ENCODE measurements at regions of chr2 and their contacts with region 1.

Region 1: GRCh38 chr2:201182650-201183364 is at the start of gene CASP10:
- DNase-seq: no peak
- H3K4me3 Mint-ChIP-seq: peak within 1 kb of the TSS; percentile 85
- H3K27ac Mint-ChIP-seq: peak within 1 kb of the TSS; percentile 90
- H3K4me1 Mint-ChIP-seq: peaks cover 58% of the 10 kb centered on the region
- H3K27me3 Mint-ChIP-seq: no peaks in the 10 kb centered on the region
- total RNA-seq, gene CASP10: 15.9 to 16.7 TPM

Region 2: GRCh38 chr2:200888704-200889625 is 293.8 kb before region 1 on chr2 and contains the starts of genes NIF3L1 and PPIL3:
- CTCF ChIA-PET with region 1: interaction called, 7 read pairs
- POLR2A ChIA-PET with region 1: interaction called, 10 read pairs
- intact Hi-C with region 1: no loop called
- DNase-seq: peak; percentile 99
- H3K4me3 Mint-ChIP-seq: peak within 1 kb of the TSS; percentile 98
- H3K27ac Mint-ChIP-seq: peak within 1 kb of the TSS; percentile 100
- H3K4me1 Mint-ChIP-seq: peaks cover 44% of the 10 kb centered on the region
- H3K27me3 Mint-ChIP-seq: no peaks in the 10 kb centered on the region
- total RNA-seq, gene NIF3L1: 30.8 to 32.7 TPM
- total RNA-seq, gene PPIL3: 84.0 to 87.9 TPM

Region 3: GRCh38 chr2:201071479-201072200 is 111.2 kb before region 1 on chr2 and contains the starts of genes HYCC2 and NDUFB3:
- CTCF ChIA-PET with region 1: interaction called, 18 read pairs
- POLR2A ChIA-PET with region 1: no interaction called
- intact Hi-C with region 1: no loop called
- DNase-seq: peak; percentile 95
- H3K4me3 Mint-ChIP-seq: peak within 1 kb of the TSS; percentile 91
- H3K27ac Mint-ChIP-seq: peak within 1 kb of the TSS; percentile 86
- H3K4me1 Mint-ChIP-seq: peaks cover 52% of the 10 kb centered on the region
- H3K27me3 Mint-ChIP-seq: no peaks in the 10 kb centered on the region
- total RNA-seq, gene HYCC2: 18.9 to 20.5 TPM
- total RNA-seq, gene NDUFB3: 158 to 162 TPM

Region 4: GRCh38 chr2:201194097-201194496 is 11.3 kb after region 1 on chr2:
- CTCF ChIA-PET with region 1: interaction called, 33 read pairs
- POLR2A ChIA-PET with region 1: interaction called, 4 read pairs
- intact Hi-C with region 1: loop called (anchors 1 kb)
- DNase-seq: no peak
- H3K4me3 Mint-ChIP-seq: no peak overlapping the region
- H3K27ac Mint-ChIP-seq: peak overlapping the region; percentile 33
- H3K4me1 Mint-ChIP-seq: peaks cover 53% of the 10 kb centered on the region
- H3K27me3 Mint-ChIP-seq: no peaks in the 10 kb centered on the region

Region 5: DNA sequence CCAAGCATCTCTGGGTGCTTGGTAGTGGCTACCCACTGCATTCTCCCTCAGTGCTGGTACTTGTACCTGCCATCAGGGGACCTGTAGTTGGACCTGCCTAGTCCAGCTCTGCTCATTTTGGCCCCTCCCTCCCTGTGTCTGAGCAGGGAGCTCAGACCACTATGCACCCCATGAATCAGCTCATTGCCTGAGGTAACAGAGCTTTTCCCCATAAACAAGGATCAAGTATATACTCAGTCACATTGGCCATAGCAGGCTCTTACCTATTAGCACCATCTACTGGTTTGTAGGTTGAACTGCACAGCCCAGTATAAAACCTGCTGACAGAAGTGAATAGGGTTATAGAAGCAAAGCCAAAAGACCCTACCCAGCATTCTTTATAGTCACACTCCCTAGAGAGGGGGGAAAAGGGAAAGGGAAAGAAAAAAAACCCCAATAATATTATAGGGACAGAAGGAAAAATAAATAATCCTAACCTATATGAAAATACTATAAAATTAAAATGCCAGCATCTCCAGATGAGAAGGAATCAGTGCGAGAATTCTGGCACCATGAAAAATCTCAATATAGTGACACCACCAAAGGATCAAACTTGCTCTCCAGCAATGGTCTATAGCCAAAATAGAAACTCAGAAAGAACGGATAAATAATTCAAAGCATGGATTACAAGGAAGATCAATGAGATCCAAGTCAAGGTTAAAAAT is 181.2 kb after region 1 on chr2:
- CTCF ChIA-PET with region 1: interaction called, 10 read pairs
- POLR2A ChIA-PET with region 1: no interaction called
- intact Hi-C with region 1: loop called (anchors 1 kb)
- DNase-seq: peak; percentile 32
- H3K4me3 Mint-ChIP-seq: no peak overlapping the region
- H3K27ac Mint-ChIP-seq: no peak overlapping the region
- H3K4me1 Mint-ChIP-seq: peaks cover 24% of the 10 kb centered on the region
- H3K27me3 Mint-ChIP-seq: no peaks in the 10 kb centered on the region

Measured in activated CD4-positive, alpha-beta memory T cell treated with anti-CD3 and anti-CD28 coated beads for 36 hours (primary cell).